ENCODE measurements at regions of chr2 and their contacts with region 1.

Region 1: GRCh38 chr2:231411831-231412617 is 16.5 kb downstream of the B3GNT7 start:
- DNase-seq: peak; percentile 76 to 85
- ATAC-seq: peak; percentile 96 to 100 (median 98)
- H3K4me3 ChIP-seq: peak overlapping the region; percentile 46 to 76 (median 61)
- H3K27ac ChIP-seq: peak overlapping the region in 3 of 10 donors; percentile 35 to 53 (median 40)
- H3K4me1 ChIP-seq: peaks cover 0 to 14% (median 12%) of the 10 kb centered on the region in 9 donors
- H3K27me3 ChIP-seq: peaks cover 0 to 43% (median 17%) of the 10 kb centered on the region in 7 donors
- CTCF ChIP-seq: peak; percentile 65 to 94 (median 90)

Region 2: GRCh38 chr2:231227309-231228162 is 184.5 kb before region 1 on chr2:
- intact Hi-C with region 1: loop called (anchors 1 to 5 kb)
- DNase-seq: peak in 1 of 2 donors; percentile 68
- ATAC-seq: peak; percentile 89 to 96 (median 94)
- H3K4me3 ChIP-seq: no peak overlapping the region
- H3K27ac ChIP-seq: peak overlapping the region in 2 of 10 donors; percentile 10 to 42
- H3K4me1 ChIP-seq: peaks cover 0 to 7% (median 0%) of the 10 kb centered on the region in 9 donors
- H3K27me3 ChIP-seq: no peaks in the 10 kb centered on the region
- CTCF ChIP-seq: peak; percentile 55 to 85 (median 80)

Region 3: DNA sequence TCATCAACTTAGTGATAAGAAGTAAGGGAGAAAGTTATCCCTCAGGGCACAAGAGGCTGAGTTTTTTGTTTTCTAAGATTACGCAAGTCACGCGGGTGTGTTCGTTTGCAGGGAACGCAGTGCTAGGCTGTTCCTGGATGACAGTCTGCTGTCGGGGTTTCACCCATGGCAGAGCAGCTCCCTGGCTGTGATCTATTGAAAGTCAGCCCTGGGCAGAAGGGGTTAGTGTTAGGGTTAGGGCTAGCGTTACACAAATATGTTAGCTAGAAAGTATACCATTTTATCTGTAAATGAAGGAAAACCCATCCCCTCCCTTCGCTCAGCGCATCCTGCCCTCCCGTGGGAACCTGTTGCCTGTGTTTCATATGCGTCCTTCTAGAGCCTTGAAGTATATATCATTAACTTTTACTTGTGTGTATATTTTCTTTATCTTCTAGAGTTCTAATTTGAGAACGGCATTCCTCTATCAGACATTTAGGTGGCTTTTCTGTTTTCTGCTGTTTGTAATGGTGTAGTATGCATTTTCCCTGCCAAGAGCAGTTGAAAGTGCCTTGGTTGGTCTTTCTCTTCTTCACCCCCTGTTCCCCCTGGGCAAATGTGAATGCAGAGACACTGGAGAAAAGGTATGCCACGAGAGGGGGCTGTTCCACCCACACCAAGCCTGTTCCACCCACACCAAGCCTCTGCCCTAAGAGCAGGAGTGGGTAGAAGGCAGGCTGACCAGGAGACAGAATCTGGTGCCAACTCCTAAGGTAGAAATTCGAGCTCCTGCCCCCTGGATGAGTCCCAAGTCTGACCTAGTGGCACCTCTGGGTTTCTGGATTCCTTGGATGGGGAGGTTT is 166.6 kb before region 1 on chr2:
- intact Hi-C with region 1: loop called in 2 of 10 experiments (anchors 5 kb)
- DNase-seq: no peak
- ATAC-seq: peak in 4 of 8 donors; percentile 32 to 57 (median 46)
- H3K4me3 ChIP-seq: no peak overlapping the region
- H3K27ac ChIP-seq: no peak overlapping the region
- H3K4me1 ChIP-seq: peaks cover 0 to 12% (median 0%) of the 10 kb centered on the region in 9 donors
- H3K27me3 ChIP-seq: no peaks in the 10 kb centered on the region
- CTCF ChIP-seq: peak in 6 of 9 donors; percentile 20 to 40 (median 28)